GM12878 (cell line): ENCODE measurements at regions of chr3 and their contacts with region 1.

Region 1: GRCh38 chr3:64484289-64484992 is 203.4 kb downstream of the ADAMTS9 start:
- DNase-seq: peak; percentile 45
- ATAC-seq: peak; percentile 99
- H3K4me3 ChIP-seq: no peak overlapping the region
- H3K27ac ChIP-seq: no peak overlapping the region
- H3K4me1 ChIP-seq: no peaks in the 10 kb centered on the region
- H3K27me3 ChIP-seq: peaks cover under 1 to 5% of the 10 kb centered on the region in 2 experiments; a peak in 1 of 4 replicates
- CTCF ChIP-seq: peak; percentile 76 to 94 (median 88); a peak in 5 of 6 replicates
- EP300 ChIP-seq: no peak
- POLR2A ChIP-seq: no peak
- RAD21 ChIP-seq: peak; percentile 98

Region 2: DNA sequence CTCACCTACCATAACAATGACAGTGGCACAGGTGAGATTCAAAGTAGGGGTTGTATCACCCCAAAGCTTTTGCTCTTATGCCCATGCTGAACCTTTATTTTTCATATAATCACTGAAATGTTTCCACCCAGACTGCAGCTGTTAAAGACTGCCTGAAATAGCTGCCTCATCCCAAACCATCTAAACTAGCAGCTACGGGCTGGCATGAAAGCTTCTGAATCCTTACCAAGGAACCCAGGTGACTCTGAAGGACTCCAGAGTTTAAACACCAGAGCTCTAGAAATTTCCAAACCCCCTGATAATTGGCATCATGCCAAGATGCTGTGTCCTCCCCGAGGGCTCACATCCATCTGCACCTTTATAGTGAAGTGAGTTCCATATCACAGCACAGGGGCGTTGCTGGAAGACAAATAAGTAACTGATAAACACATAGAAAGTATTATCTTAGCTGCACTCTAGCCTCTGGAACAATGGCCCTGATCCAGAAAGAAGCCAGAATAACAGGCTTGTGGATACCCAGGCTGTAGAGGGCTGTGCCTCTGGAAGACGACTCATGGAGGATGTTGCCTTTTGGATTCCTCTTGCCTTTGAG is 1848.1 kb before region 1 on chr3:
- CTCF ChIA-PET with region 1: no interaction called
- POLR2A ChIA-PET with region 1: no interaction called
- RAD21 ChIA-PET with region 1: no interaction called
- SMC1A ChIA-PET with region 1: no interaction called
- in situ Hi-C with region 1: no loop called
- intact Hi-C with region 1: no loop called
- DNase-seq: no peak
- ATAC-seq: no peak
- H3K4me3 ChIP-seq: no peak overlapping the region
- H3K27ac ChIP-seq: no peak overlapping the region
- H3K4me1 ChIP-seq: no peaks in the 10 kb centered on the region
- H3K27me3 ChIP-seq: peaks cover 0 to 2% of the 10 kb centered on the region in 2 experiments; a peak in 1 of 4 replicates
- CTCF ChIP-seq: no peak
- EP300 ChIP-seq: no peak
- POLR2A ChIP-seq: no peak
- RAD21 ChIP-seq: no peak

Region 3: GRCh38 chr3:63349583-63350521 is 1134.6 kb before region 1 on chr3:
- CTCF ChIA-PET with region 1: no interaction called
- POLR2A ChIA-PET with region 1: no interaction called
- RAD21 ChIA-PET with region 1: no interaction called
- SMC1A ChIA-PET with region 1: interaction called, 4 read pairs
- in situ Hi-C with region 1: no loop called
- intact Hi-C with region 1: loop called (anchors 5 kb)
- DNase-seq: no peak
- ATAC-seq: peak; percentile 87
- H3K4me3 ChIP-seq: no peak overlapping the region
- H3K27ac ChIP-seq: no peak overlapping the region
- H3K4me1 ChIP-seq: no peaks in the 10 kb centered on the region
- H3K27me3 ChIP-seq: no peaks in the 10 kb centered on the region
- CTCF ChIP-seq: peak; percentile 62 to 69 (median 69)
- EP300 ChIP-seq: no peak
- POLR2A ChIP-seq: no peak
- RAD21 ChIP-seq: peak; percentile 73

Region 4: GRCh38 chr3:64023187-64023848 is 461.1 kb before region 1 on chr3 and contains the start of gene PSMD6:
- CTCF ChIA-PET with region 1: interaction called, 99 read pairs
- POLR2A ChIA-PET with region 1: interaction called, 3 read pairs
- RAD21 ChIA-PET with region 1: interaction called, 14 read pairs
- SMC1A ChIA-PET with region 1: interaction called, 18 read pairs
- in situ Hi-C with region 1: no loop called
- intact Hi-C with region 1: no loop called
- DNase-seq: peak; percentile 49
- ATAC-seq: peak; percentile 95
- H3K4me3 ChIP-seq: peak within 1 kb of the TSS; percentile 86
- H3K27ac ChIP-seq: peak within 1 kb of the TSS; percentile 87
- H3K4me1 ChIP-seq: no peaks in the 10 kb centered on the region
- H3K27me3 ChIP-seq: no peaks in the 10 kb centered on the region
- CTCF ChIP-seq: peak; percentile 99 to 100 (median 100); a peak in 5 of 6 replicates
- EP300 ChIP-seq: 0 out of 4 replicates have a peak, but pooled peaks of 1 of the 2 experiments have one; percentile 18
- POLR2A ChIP-seq: peak; percentile 97
- RAD21 ChIP-seq: peak; percentile 28; the same call in 1 of the 2 replicates
- polyA plus RNA-seq, gene PSMD6: 84.3 to 124 TPM

Region 5: GRCh38 chr3:64039981-64040733 is 444.3 kb before region 1 on chr3:
- CTCF ChIA-PET with region 1: interaction called, 9 read pairs
- POLR2A ChIA-PET with region 1: no interaction called
- RAD21 ChIA-PET with region 1: no interaction called
- SMC1A ChIA-PET with region 1: interaction called, 98 read pairs
- in situ Hi-C with region 1: no loop called
- intact Hi-C with region 1: no loop called
- DNase-seq: no peak
- ATAC-seq: no peak
- H3K4me3 ChIP-seq: no peak overlapping the region
- H3K27ac ChIP-seq: no peak overlapping the region
- H3K4me1 ChIP-seq: no peaks in the 10 kb centered on the region
- H3K27me3 ChIP-seq: 0 out of 4 replicates have a peak, but pooled peaks cover 0 to 3% of the 10 kb centered on the region in 2 experiments
- CTCF ChIP-seq: no peak
- EP300 ChIP-seq: no peak
- POLR2A ChIP-seq: no peak
- RAD21 ChIP-seq: no peak

Region 6: DNA sequence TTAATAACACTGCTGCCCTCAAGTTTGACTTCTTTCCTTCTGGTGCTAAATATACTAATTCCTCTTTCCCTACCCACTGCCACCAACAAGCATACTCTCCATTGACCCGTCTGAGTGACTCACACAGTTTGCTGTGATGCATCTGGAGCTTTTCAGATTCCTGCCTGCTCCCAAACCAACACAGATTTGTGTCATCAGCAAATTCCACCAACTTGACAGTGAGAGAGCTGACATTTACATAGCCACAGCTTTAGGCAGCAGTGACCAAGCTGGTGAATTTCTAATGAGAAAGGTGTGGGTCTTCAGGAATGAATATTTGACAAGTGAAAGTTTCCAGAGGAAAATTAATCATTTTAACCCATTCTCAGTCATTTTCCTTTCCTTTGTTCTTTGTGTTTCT is 162.7 kb before region 1 on chr3:
- CTCF ChIA-PET with region 1: interaction called, 11 read pairs
- POLR2A ChIA-PET with region 1: no interaction called
- RAD21 ChIA-PET with region 1: no interaction called
- SMC1A ChIA-PET with region 1: interaction called, 3 read pairs
- in situ Hi-C with region 1: no loop called
- intact Hi-C with region 1: no loop called
- DNase-seq: no peak
- ATAC-seq: no peak
- H3K4me3 ChIP-seq: no peak overlapping the region
- H3K27ac ChIP-seq: no peak overlapping the region
- H3K4me1 ChIP-seq: no peaks in the 10 kb centered on the region
- H3K27me3 ChIP-seq: no peaks in the 10 kb centered on the region
- CTCF ChIP-seq: no peak
- EP300 ChIP-seq: no peak
- POLR2A ChIP-seq: no peak
- RAD21 ChIP-seq: no peak

Region 7: DNA sequence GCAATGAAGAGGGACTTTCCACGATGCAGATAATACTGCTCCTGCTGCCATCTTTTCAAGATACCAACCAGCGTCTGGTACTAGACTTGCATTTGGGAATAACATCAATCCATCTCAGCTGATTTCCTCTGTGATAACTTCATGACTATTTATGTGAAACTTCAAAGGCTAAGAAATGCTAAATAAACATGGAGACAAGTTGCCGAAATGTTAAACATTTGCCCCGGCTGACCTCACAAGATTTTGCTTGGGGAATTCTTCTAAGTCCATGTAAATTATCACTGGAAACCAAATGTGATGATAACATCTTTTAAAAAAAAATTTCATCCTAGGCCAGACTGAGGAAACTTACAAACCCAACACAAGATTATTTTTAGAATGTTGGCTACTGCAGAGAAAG is 73.3 kb before region 1 on chr3:
- CTCF ChIA-PET with region 1: interaction called, 17 read pairs
- POLR2A ChIA-PET with region 1: interaction called, 4 read pairs
- RAD21 ChIA-PET with region 1: interaction called, 10 read pairs
- SMC1A ChIA-PET with region 1: interaction called, 10 read pairs
- in situ Hi-C with region 1: no loop called
- intact Hi-C with region 1: no loop called
- DNase-seq: no peak
- ATAC-seq: no peak
- H3K4me3 ChIP-seq: no peak overlapping the region
- H3K27ac ChIP-seq: no peak overlapping the region
- H3K4me1 ChIP-seq: no peaks in the 10 kb centered on the region
- H3K27me3 ChIP-seq: no peaks in the 10 kb centered on the region
- CTCF ChIP-seq: no peak
- EP300 ChIP-seq: no peak
- POLR2A ChIP-seq: no peak
- RAD21 ChIP-seq: no peak

Region 8: DNA sequence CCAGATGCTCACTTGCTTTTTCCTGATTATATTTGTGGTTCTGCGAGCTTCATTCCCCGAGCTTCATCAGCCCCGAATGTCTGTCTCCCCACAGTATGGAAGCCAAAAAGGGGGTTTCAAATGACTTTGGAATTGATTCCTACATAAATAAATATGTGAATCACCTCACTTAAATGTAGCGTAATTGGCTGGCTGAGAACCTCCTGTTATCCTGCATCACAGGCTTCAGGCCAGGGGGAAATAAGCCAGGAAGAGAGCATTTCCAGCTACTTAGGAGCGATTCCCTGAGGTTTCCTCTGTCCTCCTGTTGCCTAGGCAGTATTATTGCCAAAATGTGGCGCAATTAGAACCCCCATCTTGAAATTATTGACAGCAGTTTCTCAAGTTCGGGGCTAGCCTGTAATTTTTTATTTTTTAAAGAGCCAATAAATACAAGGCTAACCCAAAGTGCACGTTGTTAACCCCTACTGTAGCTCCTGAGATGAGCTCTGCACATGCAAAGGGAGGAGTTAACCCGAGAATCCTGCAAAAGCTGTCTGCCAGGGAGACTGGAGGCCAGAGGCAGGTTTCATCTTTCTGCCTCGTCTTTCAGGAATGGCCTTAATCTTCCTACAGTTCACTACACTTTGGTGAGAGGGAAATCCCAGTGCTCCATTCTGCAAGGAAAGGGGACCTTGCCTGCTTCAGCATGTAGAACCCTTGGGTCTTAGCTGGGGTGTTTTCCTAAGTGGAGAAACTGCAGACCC is 55.2 kb after region 1 on chr3:
- CTCF ChIA-PET with region 1: no interaction called
- POLR2A ChIA-PET with region 1: no interaction called
- RAD21 ChIA-PET with region 1: no interaction called
- SMC1A ChIA-PET with region 1: no interaction called
- in situ Hi-C with region 1: no loop called
- intact Hi-C with region 1: no loop called
- DNase-seq: no peak
- ATAC-seq: no peak
- H3K4me3 ChIP-seq: no peak overlapping the region
- H3K27ac ChIP-seq: no peak overlapping the region
- H3K4me1 ChIP-seq: no peaks in the 10 kb centered on the region
- H3K27me3 ChIP-seq: peaks cover 0 to 3% of the 10 kb centered on the region in 2 experiments; a peak in 1 of 4 replicates
- CTCF ChIP-seq: no peak
- EP300 ChIP-seq: no peak
- POLR2A ChIP-seq: no peak
- RAD21 ChIP-seq: no peak

Region 9: DNA sequence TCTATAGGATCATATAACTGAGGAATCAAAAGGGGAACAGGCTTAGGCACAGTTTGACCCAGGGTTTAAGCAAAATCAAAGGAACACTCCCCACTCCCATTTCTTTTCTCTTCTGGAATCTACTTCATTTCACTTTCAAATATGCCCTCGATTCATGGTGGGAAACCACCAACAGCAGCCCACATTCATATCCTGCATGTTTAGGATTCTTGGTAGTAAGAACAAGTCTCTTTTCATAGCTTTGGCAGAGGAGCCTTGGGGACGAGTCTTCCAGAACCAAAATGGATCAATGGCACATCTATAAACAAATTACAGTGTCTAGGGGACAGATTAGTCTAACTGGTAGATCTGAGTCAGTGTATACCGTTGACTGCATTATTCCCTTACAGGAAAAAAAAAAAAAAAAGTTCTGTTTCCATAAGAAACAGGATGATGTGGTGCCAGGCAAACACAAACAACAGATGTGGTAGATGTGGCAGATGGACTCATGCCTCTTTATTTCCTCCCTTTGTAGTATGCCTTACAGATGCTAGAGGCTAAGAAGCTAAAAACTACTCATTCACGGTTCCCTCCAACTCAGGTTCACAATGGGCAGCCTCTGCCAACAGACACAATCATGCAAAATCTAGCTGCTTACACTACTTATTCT is 781.6 kb after region 1 on chr3:
- CTCF ChIA-PET with region 1: no interaction called
- POLR2A ChIA-PET with region 1: no interaction called
- RAD21 ChIA-PET with region 1: no interaction called
- SMC1A ChIA-PET with region 1: no interaction called
- in situ Hi-C with region 1: no loop called
- intact Hi-C with region 1: no loop called
- DNase-seq: no peak
- ATAC-seq: no peak
- H3K4me3 ChIP-seq: no peak overlapping the region
- H3K27ac ChIP-seq: no peak overlapping the region
- H3K4me1 ChIP-seq: no peaks in the 10 kb centered on the region
- H3K27me3 ChIP-seq: no peaks in the 10 kb centered on the region
- CTCF ChIP-seq: no peak
- EP300 ChIP-seq: no peak
- POLR2A ChIP-seq: no peak
- RAD21 ChIP-seq: no peak